ENCODE measurements at regions of chr14 and their contacts with region 1.

Region 1: GRCh38 chr14:49633640-49634546 is 1.2 kb downstream of the DNAAF2 start:
- DNase-seq: peak; percentile 98
- ATAC-seq: peak; percentile 88
- H3K4me3 Mint-ChIP-seq: peak overlapping the region; percentile 98
- H3K27ac Mint-ChIP-seq: peak overlapping the region; percentile 95
- H3K4me1 Mint-ChIP-seq: peaks cover 46% of the 10 kb centered on the region
- H3K27me3 Mint-ChIP-seq: no peaks in the 10 kb centered on the region

Region 2: GRCh38 chr14:49438256-49438770 is 195.6 kb before region 1 on chr14:
- CTCF ChIA-PET with region 1: no interaction called
- POLR2A ChIA-PET with region 1: no interaction called
- intact Hi-C with region 1: no loop called
- DNase-seq: no peak
- ATAC-seq: no peak
- H3K4me3 Mint-ChIP-seq: no peak overlapping the region
- H3K27ac Mint-ChIP-seq: no peak overlapping the region
- H3K4me1 Mint-ChIP-seq: no peaks in the 10 kb centered on the region
- H3K27me3 Mint-ChIP-seq: peaks cover 12% of the 10 kb centered on the region

Region 3: DNA sequence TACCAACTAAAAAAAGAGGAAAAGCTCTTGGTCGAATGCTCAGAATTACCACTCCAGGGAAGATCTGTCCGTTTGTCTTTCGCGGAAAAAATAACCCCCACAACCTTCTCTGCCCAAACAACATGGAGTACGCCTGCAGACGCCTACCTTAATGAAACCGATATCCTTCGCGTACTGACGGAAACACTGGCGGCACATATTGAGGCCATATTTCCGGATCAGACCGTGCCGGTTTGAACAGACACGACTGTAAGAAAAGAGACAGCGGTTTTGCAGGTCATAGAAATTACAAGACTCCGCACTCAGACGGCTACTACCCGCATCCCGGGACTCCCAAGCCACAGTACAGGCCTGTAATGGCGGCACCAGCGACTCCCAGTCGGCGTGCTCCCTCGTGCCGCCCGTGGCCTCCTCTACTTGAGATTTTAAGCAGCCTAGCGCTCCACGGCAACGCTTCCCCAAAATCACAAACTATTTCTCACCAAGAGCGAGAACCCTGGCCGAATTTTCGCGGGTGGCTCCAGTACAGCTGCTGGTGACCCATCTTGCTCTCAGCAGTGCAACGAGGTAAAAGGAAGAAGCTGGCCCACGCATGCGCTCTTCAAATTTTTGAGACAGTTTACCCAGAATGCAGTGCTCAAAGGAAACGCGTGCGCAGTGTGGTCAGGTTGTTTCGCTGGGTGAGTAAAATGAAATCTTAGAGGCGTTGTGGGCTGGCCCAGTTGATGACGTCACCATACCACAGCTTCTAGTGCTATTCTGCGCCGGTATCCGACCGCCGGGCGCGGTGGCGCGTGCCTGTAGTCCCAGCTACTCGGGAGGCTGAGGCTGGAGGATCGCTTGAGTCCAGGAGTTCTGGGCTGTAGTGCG is 47.9 kb before region 1 on chr14 and contains the start of gene RPS29:
- CTCF ChIA-PET with region 1: interaction called, 6 read pairs
- POLR2A ChIA-PET with region 1: interaction called, 3 read pairs
- intact Hi-C with region 1: loop called (anchors 1 kb)
- DNase-seq: peak; percentile 99
- ATAC-seq: peak; percentile 84
- H3K4me3 Mint-ChIP-seq: peak within 1 kb of the TSS; percentile 92
- H3K27ac Mint-ChIP-seq: peak within 1 kb of the TSS; percentile 96
- H3K4me1 Mint-ChIP-seq: peaks cover 40% of the 10 kb centered on the region
- H3K27me3 Mint-ChIP-seq: no peaks in the 10 kb centered on the region
- total RNA-seq, gene RPS29: 481 to 1,987 TPM

Region 4: GRCh38 chr14:49620182-49621113 is 13.4 kb before region 1 on chr14 and contains the starts of genes MGAT2 and RPL36AL:
- CTCF ChIA-PET with region 1: interaction called, 78 read pairs
- POLR2A ChIA-PET with region 1: interaction called, 68 read pairs
- intact Hi-C with region 1: loop called (anchors 1 kb)
- DNase-seq: peak; percentile 97
- ATAC-seq: peak; percentile 90
- H3K4me3 Mint-ChIP-seq: peak within 1 kb of the TSS; percentile 93
- H3K27ac Mint-ChIP-seq: peak within 1 kb of the TSS; percentile 97
- H3K4me1 Mint-ChIP-seq: peaks cover 51% of the 10 kb centered on the region
- H3K27me3 Mint-ChIP-seq: no peaks in the 10 kb centered on the region
- total RNA-seq, gene MGAT2: 23.8 to 32.2 TPM
- total RNA-seq, gene RPL36AL: 272 to 309 TPM

Region 5: GRCh38 chr14:49677643-49678042 is 43.8 kb after region 1 on chr14:
- CTCF ChIA-PET with region 1: no interaction called
- POLR2A ChIA-PET with region 1: no interaction called
- intact Hi-C with region 1: no loop called
- DNase-seq: no peak
- ATAC-seq: peak; percentile 33
- H3K4me3 Mint-ChIP-seq: no peak overlapping the region
- H3K27ac Mint-ChIP-seq: no peak overlapping the region
- H3K4me1 Mint-ChIP-seq: peaks cover 7% of the 10 kb centered on the region
- H3K27me3 Mint-ChIP-seq: no peaks in the 10 kb centered on the region

Region 6: DNA sequence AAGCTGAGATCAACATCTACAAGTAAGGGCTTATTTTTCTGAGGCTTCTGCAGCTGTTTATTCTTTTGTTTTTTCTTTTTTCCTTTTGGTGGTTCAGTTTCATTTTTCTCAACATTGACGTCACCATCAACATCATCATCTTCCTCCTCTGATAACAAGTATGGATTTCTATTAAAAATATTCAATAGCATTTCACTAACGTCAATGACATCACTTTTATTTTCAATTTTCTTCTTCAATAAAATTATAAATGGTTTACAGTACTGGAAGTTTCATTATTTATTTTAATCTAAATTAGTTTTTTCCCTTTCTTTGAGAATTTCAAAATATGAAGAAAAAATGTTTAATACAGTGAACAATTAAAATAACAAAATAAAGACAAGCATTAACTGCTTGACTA is 194.7 kb after region 1 on chr14:
- CTCF ChIA-PET with region 1: interaction called, 11 read pairs
- POLR2A ChIA-PET with region 1: interaction called, 5 read pairs
- intact Hi-C with region 1: loop called (anchors 1 to 2 kb)
- DNase-seq: no peak
- ATAC-seq: no peak
- H3K4me3 Mint-ChIP-seq: no peak overlapping the region
- H3K27ac Mint-ChIP-seq: no peak overlapping the region
- H3K4me1 Mint-ChIP-seq: no peaks in the 10 kb centered on the region
- H3K27me3 Mint-ChIP-seq: no peaks in the 10 kb centered on the region

Region 7: DNA sequence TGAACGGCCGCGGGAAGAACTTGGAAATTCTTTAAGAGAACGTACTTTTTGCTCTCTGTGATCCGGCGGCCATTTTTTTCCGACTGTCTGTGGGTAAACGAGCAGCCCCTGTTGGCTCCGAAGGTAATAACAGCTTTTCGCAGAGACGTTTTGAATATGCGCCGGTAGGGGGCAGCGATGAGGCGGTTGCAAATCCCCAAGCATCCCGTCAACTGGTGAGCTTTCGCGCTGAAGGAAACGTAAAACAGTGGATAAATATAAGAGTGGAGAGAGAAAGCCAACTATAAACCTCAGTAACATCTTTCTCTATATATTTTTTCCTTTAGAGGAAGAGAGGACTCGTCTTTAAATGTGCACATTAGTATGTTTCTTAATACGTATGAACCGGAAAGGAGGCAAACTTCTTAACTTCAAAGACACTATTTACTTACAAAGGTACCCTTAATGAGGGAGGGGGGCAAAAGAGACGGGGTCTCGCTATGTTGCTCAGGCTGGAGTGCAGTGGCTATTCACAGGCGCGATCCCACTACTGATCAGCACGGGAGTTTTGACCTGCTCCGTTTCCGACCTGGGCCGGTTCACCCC is 228.3 kb after region 1 on chr14:
- CTCF ChIA-PET with region 1: interaction called, 5 read pairs
- POLR2A ChIA-PET with region 1: interaction called, 11 read pairs
- intact Hi-C with region 1: loop called in 1 of 2 experiments (anchors 1 kb)
- DNase-seq: peak; percentile 92
- ATAC-seq: peak; percentile 13
- H3K4me3 Mint-ChIP-seq: no peak overlapping the region
- H3K27ac Mint-ChIP-seq: no peak overlapping the region
- H3K4me1 Mint-ChIP-seq: peaks cover 20% of the 10 kb centered on the region
- H3K27me3 Mint-ChIP-seq: no peaks in the 10 kb centered on the region

Region 8: GRCh38 chr14:49879683-49880204 is 245.9 kb after region 1 on chr14:
- CTCF ChIA-PET with region 1: no interaction called
- POLR2A ChIA-PET with region 1: no interaction called
- intact Hi-C with region 1: no loop called
- DNase-seq: peak; percentile 85
- ATAC-seq: peak; percentile 92
- H3K4me3 Mint-ChIP-seq: no peak overlapping the region
- H3K27ac Mint-ChIP-seq: peak overlapping the region; percentile 47
- H3K4me1 Mint-ChIP-seq: peaks cover 27% of the 10 kb centered on the region
- H3K27me3 Mint-ChIP-seq: no peaks in the 10 kb centered on the region

Region 9: DNA sequence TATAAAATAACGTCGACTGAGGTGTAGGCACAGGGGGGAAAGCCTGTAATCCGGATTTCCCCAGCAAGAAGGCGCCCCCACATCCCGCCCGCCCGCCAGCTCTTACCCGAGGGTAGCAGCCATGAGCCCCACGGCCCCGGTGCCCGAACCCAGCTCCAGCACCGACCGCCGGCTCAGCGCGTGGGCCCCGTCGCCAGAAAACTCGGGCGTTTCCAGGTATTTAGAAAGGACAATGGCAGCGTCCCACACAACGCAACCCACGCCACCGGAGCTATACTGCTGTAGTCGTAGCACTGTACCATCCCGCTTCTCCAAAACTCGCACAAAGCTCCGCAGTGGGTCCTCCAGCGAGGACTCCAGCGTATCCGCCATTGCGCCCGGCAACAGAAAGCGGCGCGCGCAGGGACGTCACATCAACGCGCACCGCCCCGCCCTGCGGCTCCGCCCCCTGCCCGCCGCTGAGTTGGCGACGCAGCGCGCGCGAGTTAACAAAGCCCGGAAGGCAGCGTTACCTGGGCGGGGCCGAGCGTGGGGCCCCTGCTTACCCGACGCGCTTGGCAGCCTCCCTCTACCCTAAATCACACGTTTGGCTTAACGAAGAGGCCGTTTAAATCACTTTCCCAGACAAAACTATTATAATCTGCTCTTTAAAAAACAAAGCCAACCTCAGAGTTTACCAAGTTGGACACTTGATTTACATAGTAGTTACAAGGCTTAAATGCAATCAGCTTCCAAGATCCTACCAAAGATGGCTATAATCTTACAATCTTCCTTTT is 482.5 kb after region 1 on chr14 and contains the start of gene VCPKMT:
- CTCF ChIA-PET with region 1: interaction called, 8 read pairs
- POLR2A ChIA-PET with region 1: interaction called, 4 read pairs
- intact Hi-C with region 1: loop called (anchors 2 to 5 kb)
- DNase-seq: peak; percentile 98
- ATAC-seq: peak; percentile 99
- H3K4me3 Mint-ChIP-seq: peak within 1 kb of the TSS; percentile 95
- H3K27ac Mint-ChIP-seq: peak within 1 kb of the TSS; percentile 97
- H3K4me1 Mint-ChIP-seq: peaks cover 25% of the 10 kb centered on the region
- H3K27me3 Mint-ChIP-seq: no peaks in the 10 kb centered on the region
- total RNA-seq, gene VCPKMT: 6.6 to 10.4 TPM

Region 10: GRCh38 chr14:50532502-50533240 is 898.8 kb after region 1 on chr14 and contains the start of gene MAP4K5:
- CTCF ChIA-PET with region 1: interaction called, 3 read pairs
- POLR2A ChIA-PET with region 1: no interaction called
- intact Hi-C with region 1: loop called in 1 of 2 experiments (anchors 2 kb)
- DNase-seq: peak; percentile 94
- ATAC-seq: peak; percentile 96
- H3K4me3 Mint-ChIP-seq: peak within 1 kb of the TSS; percentile 90
- H3K27ac Mint-ChIP-seq: peak within 1 kb of the TSS; percentile 86
- H3K4me1 Mint-ChIP-seq: peaks cover 47% of the 10 kb centered on the region
- H3K27me3 Mint-ChIP-seq: no peaks in the 10 kb centered on the region
- total RNA-seq, gene MAP4K5: 19.1 to 31.2 TPM